ENCODE measurements at regions of chr1 and their contacts with region 1.

Region 1: DNA sequence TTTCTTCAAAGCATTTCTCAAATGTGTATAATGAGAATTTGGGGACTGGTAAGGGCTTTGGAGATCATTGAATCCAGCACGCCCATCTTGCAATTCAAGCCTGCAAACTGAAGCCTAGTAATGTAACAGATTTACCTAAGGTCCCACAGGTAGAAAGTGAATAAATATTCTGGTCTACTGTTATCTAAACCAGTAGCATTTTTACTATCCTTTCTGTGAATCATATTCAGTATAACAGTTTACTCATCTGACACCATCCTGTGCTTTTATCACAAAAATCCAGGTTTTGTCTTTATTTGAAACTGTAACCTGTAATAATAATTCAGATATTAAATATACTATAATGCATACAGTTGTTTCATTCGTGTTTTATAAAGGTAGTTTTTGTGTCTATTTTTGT is 17.4 kb downstream of the KCNA3 start:
- DNase-seq: no peak
- H3K4me3 ChIP-seq: no peak overlapping the region
- H3K4me3 Mint-ChIP-seq: peak overlapping the region in 1 of 8 donors; percentile 41
- H3K27ac ChIP-seq: no peak overlapping the region
- H3K27ac Mint-ChIP-seq: peak overlapping the region in 4 of 7 donors; percentile 49 to 70 (median 64)
- H3K4me1 ChIP-seq: peaks cover 50% of the 10 kb centered on the region
- H3K4me1 Mint-ChIP-seq: peaks cover 31 to 64% (median 48%) of the 10 kb centered on the region in 4 donors
- H3K27me3 ChIP-seq: no peaks in the 10 kb centered on the region
- H3K27me3 Mint-ChIP-seq: no peaks in the 10 kb centered on the region

Region 2: DNA sequence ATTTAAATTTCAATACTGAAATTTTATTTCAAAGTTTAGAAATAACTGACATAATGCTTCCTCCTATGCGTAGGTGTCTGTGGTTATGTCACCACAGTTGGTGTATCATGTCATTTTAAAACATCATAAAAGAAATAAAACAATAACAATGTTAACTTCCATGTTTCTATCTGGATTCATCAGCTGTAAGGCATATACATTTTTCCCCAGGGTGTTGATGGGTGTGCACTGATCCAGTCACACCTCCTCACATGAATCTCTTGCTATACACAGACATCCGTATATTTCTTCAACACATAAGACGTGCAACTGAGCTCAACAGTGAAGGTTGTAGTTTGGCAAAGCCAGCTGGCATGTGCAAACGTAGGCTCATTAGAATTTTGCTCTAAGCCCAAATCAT is 11.2 kb after region 1 on chr1:
- CTCF ChIA-PET with region 1: interaction called, 3 read pairs
- POLR2A ChIA-PET with region 1: interaction called, 993 read pairs
- intact Hi-C with region 1: loop called (anchors 1 kb)
- DNase-seq: peak; percentile 36 to 54 (median 49)
- H3K4me3 ChIP-seq: peak overlapping the region; percentile 52 to 68
- H3K4me3 Mint-ChIP-seq: peak overlapping the region; percentile 68 to 89 (median 84)
- H3K27ac ChIP-seq: peak overlapping the region; percentile 91
- H3K27ac Mint-ChIP-seq: peak overlapping the region in 6 of 7 donors; percentile 77 to 94 (median 89)
- H3K4me1 ChIP-seq: peaks cover 76% of the 10 kb centered on the region
- H3K4me1 Mint-ChIP-seq: peaks cover 19 to 40% (median 23%) of the 10 kb centered on the region in 4 donors
- H3K27me3 ChIP-seq: no peaks in the 10 kb centered on the region
- H3K27me3 Mint-ChIP-seq: no peaks in the 10 kb centered on the region

Measured in CD4-positive, alpha-beta memory T cell (primary cell).